Sciatic nerve (tissue), 2 donors: ENCODE measurements at regions of chr22 and their contacts with region 1.

Region 1: DNA sequence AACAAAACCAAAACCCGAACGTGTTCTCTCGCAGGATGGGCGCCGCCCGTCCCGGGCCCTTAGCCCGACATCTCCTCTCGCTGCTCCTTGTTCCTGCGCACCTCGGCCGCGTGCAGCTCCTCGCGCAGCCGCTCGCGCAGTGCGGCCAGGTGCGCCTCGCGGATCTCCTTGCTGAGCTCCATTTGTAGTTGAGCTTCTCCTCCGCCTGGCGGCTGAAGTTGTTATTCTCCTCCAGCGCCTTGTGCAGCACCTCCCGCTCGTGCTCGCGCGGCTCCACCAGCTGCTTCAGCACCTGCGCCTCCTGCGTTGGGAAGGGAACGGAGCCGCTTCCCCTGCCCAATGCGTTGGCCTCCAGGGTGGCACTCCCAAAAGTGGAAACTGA is 20.4 kb upstream of the CRYBB3 start:
- DNase-seq: no peak
- ATAC-seq: no peak

Region 2: DNA sequence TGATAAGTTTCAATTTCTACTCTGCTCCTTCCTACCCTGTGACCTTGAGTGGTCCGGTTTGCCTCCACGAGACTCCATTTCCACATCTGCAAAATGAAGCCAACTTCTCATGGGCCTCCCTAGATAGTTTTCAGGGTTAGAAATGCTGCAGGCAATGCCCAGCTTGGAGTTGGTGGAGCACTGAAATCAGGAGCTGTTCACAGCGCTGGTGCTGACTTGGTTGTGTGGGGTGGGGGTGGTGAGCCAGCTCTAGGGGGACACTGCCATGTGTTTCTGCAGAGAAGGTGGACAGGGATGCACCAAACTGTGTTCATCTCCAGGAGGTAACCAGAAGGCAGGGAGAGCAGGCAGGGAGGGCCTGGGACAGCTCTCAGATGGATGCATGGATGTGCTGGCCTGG is 336.2 kb before region 1 on chr22:
- intact Hi-C with region 1: loop called (anchors 5 kb)
- DNase-seq: no peak
- ATAC-seq: no peak

Region 3: GRCh38 chr22:25057013-25057881 is 122.0 kb before region 1 on chr22:
- intact Hi-C with region 1: no loop called
- DNase-seq: peak; percentile 84
- ATAC-seq: peak; percentile 53